Cardiac septum (tissue), 1 donor: ENCODE measurements at regions of chr15 and their contacts with region 1.

Region 1: DNA sequence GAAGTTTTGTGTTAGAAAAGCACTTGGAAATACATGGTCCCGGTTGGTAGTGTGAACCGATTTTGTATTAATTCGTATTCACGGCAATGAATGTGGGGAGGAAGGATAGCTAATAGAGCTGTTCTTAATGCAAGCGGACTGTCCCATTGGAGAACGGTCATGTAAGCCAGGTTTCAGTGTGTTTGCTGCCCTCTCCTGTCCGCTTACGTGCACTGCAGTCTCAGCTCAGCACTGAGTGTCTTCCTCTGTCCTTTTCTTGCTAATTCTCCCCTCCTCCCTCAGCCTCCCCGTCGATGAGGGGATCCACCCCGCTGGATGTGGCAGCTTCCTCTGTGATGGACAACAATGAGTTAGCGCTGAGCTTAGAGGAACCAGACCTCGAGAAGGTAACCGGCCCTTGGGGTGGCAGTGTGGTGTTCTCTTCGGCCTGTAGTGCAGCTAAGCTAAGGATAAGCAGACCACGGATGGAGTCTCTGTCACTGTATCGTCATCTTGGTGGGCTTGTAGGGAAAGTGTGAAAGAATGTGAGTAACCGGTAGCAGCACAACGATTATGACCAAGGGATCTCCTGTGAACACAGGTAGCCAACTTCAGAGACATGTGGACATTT is 267.5 kb upstream of the CHRM5 start:
- DNase-seq: no peak

Region 2: GRCh38 chr15:33021806-33022389 is 678.9 kb before region 1 on chr15:
- intact Hi-C with region 1: loop called (anchors 5 kb)
- DNase-seq: no peak

Region 3: DNA sequence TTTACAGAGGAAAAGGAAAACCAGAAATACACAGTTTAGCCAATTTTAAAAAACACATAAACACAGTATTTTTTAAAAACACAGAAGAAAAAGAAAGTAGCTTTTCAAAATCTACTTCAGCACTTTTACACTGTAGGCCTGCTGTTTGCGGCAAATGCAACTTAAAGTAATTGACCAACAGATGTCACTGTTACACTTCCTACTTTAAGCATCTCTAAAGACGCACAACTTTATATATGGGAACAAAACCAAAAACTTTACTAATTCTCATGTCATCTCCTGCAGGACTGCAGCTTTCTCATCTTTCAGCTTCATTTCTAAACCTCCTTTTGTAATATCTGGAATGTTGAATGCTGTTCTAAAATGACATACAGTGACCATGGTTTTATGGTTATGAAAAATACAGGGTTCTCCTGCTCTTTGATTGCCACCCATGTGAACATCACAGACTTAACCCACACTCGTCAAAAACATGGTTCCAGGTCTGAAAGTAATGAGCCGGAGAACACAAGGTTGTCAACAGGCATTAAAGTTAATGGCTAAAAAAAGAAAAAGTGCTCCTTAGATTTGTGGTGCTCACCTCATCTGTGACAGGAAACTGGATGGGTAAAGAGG is 614.2 kb before region 1 on chr15:
- intact Hi-C with region 1: loop called (anchors 5 kb)
- DNase-seq: no peak

Region 4: GRCh38 chr15:33234014-33234461 is 466.8 kb before region 1 on chr15:
- intact Hi-C with region 1: loop called (anchors 10 kb)
- DNase-seq: no peak

Region 5: GRCh38 chr15:33292717-33293307 is 408.0 kb before region 1 on chr15:
- intact Hi-C with region 1: loop called (anchors 5 kb)
- DNase-seq: no peak